ENCODE measurements at regions of chr2 and their contacts with region 1.

Region 1: DNA sequence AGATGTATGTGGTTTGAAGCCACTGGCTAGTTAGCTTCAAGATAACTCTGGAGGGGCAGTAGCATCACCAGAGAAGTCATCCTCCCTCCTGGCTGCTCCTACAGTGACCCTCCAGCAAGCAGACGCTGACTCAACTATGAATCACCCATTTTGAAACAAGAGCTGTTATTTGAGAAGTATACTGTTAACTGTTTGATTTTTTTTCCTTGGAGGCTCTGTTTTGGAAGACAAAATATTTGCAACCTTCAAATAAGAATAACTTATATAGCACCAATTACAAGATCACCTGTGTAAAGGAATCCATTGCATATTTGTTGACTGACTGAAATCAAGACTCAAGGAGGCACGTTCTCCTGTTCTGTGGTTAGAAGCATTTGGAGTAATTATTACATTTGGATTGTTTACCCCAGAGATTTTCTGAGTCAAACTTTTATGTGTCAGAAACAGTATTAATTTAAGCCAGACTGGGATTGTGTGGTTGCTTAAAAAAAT is 313.8 kb downstream of the MTX2 start:
- DNase-seq: peak; percentile 79 to 93
- H3K4me3 ChIP-seq: peak overlapping the region; percentile 25; the same call in 1 of the 2 replicates
- H3K27ac ChIP-seq: peak overlapping the region; percentile 86
- H3K4me1 ChIP-seq: peaks cover 30% of the 10 kb centered on the region
- H3K27me3 ChIP-seq: no peaks in the 10 kb centered on the region
- CTCF ChIP-seq: no peak

Region 2: DNA sequence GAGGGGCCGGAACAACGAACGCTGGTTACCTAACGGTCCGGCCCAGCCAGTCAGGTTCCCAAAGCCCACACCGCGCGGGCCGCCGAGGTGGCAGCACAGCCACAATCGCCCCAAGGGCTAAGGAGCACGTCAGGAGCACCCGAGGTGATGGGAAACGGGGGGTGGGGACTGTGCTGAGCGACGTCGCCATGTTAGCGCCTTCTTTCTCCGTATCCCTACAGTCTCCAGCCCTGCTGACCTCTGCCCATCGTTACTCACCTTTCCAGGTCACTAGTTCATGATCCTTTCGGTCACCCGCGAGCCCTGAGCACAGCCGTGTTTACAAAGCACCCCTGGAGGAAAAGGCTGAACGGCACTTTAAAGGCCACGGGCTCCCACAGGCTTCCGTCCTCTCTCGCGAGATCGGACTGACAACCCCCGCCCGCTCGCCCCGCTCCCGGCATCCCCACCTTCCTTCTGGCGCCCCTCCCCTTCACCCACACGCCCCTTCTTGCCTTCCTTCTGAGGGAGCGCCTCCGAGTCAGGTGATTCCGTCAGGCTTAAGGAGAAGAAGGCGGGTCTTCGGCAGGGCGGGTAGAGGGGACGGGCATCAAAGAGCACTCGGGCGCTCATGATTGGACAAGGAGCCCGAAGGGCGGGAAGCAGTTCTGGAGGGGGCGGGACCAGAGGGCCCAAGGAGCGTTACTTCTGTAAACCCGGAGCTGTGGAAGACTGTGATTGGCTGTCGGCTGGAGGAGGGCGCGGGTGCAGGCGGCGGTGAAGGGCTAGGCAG is 1415.1 kb before region 1 on chr2 and contains the start of gene ATF2:
- CTCF ChIA-PET with region 1: no interaction called
- POLR2A ChIA-PET with region 1: no interaction called
- intact Hi-C with region 1: loop called (anchors 10 kb)
- DNase-seq: peak; percentile 100
- H3K4me3 ChIP-seq: peak within 1 kb of the TSS; percentile 91
- H3K27ac ChIP-seq: peak within 1 kb of the TSS; percentile 67
- H3K4me1 ChIP-seq: peaks cover 20% of the 10 kb centered on the region
- H3K27me3 ChIP-seq: no peaks in the 10 kb centered on the region
- CTCF ChIP-seq: no peak
- total RNA-seq, gene ATF2: 80.9 and 94.5 TPM in 2 replicates

Region 3: DNA sequence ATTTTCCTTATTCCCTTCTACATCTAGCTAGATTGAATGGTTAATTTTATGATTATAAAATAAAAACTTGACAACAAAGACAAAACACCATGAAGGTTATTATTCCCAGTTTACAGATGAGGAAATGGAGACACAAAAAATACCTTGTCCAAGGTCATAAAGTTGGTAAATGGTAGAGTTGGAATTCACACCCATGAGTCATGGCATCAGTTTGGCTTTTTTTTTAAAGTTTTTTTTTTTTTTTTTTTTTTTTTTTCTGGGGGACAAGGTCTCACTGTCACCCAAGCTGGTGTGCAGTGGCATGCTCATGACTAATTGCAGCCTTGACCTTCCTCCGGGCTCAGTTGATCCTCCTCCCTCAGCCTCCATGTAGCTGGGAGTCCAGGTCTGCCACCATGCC is 243.8 kb before region 1 on chr2:
- CTCF ChIA-PET with region 1: no interaction called
- POLR2A ChIA-PET with region 1: no interaction called
- intact Hi-C with region 1: no loop called
- DNase-seq: no peak
- H3K4me3 ChIP-seq: no peak overlapping the region
- H3K27ac ChIP-seq: no peak overlapping the region
- H3K4me1 ChIP-seq: no peaks in the 10 kb centered on the region
- H3K27me3 ChIP-seq: no peaks in the 10 kb centered on the region
- CTCF ChIP-seq: no peak

Region 4: GRCh38 chr2:176526995-176527901 is 55.8 kb before region 1 on chr2:
- CTCF ChIA-PET with region 1: no interaction called
- POLR2A ChIA-PET with region 1: no interaction called
- intact Hi-C with region 1: loop called (anchors 5 kb)
- DNase-seq: no peak
- H3K4me3 ChIP-seq: no peak overlapping the region
- H3K27ac ChIP-seq: no peak overlapping the region
- H3K4me1 ChIP-seq: no peaks in the 10 kb centered on the region
- H3K27me3 ChIP-seq: no peaks in the 10 kb centered on the region; the same call in 1 of the 2 replicates
- CTCF ChIP-seq: no peak

Region 5: DNA sequence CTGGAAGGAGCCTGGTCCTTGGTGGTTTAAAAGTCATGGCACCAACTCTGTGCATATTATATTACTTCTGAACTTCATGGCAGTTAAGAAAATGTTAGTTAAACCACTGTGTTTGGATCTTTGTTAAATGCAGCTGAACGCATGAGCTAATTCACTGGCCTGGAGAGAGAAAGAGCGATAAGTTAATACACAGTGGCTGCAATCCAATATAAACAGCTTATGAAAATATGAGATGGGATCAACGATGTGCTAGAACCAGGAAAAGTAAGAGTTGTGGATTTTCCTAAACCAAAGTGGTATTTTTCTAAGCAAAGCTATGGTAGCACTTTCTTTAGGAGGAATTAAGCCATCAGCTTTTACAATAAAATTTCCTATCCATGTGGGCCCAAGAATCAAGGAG is 12.9 kb after region 1 on chr2:
- CTCF ChIA-PET with region 1: no interaction called
- POLR2A ChIA-PET with region 1: interaction called, 13 read pairs
- intact Hi-C with region 1: no loop called
- DNase-seq: no peak
- H3K4me3 ChIP-seq: no peak overlapping the region
- H3K27ac ChIP-seq: no peak overlapping the region
- H3K4me1 ChIP-seq: no peaks in the 10 kb centered on the region
- H3K27me3 ChIP-seq: no peaks in the 10 kb centered on the region
- CTCF ChIP-seq: no peak

Region 6: DNA sequence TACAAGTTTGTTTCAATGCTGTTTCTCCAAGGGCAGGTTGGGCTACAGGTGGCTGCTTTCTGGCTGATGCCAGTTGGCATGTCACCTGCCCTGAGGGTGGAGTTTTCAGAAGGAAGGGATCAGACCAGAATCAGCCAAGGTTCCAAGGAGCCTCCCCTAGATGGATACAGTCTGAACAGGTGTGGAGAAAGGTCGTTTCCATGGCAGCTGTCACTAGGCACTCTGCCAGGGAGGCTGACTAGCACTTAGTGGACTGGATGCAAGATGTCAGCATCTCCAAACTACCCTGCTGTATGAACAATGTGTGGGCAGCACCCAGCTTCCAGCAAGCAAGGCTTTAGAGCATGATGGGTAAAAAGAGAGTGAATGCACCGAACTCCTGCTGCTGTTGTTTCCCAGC is 185.2 kb after region 1 on chr2:
- CTCF ChIA-PET with region 1: no interaction called
- POLR2A ChIA-PET with region 1: no interaction called
- intact Hi-C with region 1: no loop called
- DNase-seq: no peak
- H3K4me3 ChIP-seq: no peak overlapping the region
- H3K27ac ChIP-seq: no peak overlapping the region
- H3K4me1 ChIP-seq: no peaks in the 10 kb centered on the region
- H3K27me3 ChIP-seq: peaks cover 40% of the 10 kb centered on the region
- CTCF ChIP-seq: no peak

Region 7: DNA sequence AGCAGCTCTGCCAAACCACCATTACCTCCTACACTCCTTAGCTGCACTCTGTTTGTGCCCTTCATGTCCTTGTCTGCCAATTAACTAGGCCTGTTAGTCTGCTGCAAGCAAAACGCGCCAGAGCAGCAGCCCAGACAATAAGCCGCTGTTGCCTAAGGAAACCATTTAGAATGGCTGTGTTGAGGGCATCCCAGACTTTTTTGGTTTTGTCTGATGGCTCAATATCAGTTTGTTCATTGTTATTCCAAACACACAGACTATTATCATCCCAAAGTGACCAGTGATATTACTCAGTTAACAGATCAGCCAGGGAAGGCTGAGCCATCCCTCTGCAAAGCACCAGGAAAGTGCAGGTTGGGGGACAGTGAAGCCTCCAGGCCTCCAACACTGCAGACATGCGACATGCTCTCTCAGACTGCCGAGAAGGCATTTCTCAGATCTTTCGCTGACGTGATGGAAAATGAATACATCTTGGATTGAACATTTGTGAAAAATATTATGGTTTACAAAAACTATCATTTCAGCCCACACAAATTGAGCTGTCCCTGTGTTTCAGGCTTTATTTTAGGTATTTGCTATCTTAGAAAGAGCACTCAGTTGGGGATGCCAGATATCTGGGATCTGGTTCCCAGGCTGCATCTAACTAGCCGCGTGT is 447.5 kb after region 1 on chr2:
- CTCF ChIA-PET with region 1: no interaction called
- POLR2A ChIA-PET with region 1: no interaction called
- intact Hi-C with region 1: no loop called
- DNase-seq: no peak
- H3K4me3 ChIP-seq: no peak overlapping the region
- H3K27ac ChIP-seq: no peak overlapping the region
- H3K4me1 ChIP-seq: no peaks in the 10 kb centered on the region
- H3K27me3 ChIP-seq: peaks cover 12% of the 10 kb centered on the region; the same call in 1 of the 2 replicates
- CTCF ChIP-seq: no peak

Region 8: GRCh38 chr2:177078416-177078815 is 495.4 kb after region 1 on chr2:
- CTCF ChIA-PET with region 1: no interaction called
- POLR2A ChIA-PET with region 1: no interaction called
- intact Hi-C with region 1: no loop called
- DNase-seq: no peak
- H3K4me3 ChIP-seq: no peak overlapping the region
- H3K27ac ChIP-seq: no peak overlapping the region
- H3K4me1 ChIP-seq: no peaks in the 10 kb centered on the region
- H3K27me3 ChIP-seq: no peaks in the 10 kb centered on the region
- CTCF ChIP-seq: no peak

Measured in PC-9 (cell line).